ENCODE measurements at regions of chr6 and their contacts with region 1.

Region 1: DNA sequence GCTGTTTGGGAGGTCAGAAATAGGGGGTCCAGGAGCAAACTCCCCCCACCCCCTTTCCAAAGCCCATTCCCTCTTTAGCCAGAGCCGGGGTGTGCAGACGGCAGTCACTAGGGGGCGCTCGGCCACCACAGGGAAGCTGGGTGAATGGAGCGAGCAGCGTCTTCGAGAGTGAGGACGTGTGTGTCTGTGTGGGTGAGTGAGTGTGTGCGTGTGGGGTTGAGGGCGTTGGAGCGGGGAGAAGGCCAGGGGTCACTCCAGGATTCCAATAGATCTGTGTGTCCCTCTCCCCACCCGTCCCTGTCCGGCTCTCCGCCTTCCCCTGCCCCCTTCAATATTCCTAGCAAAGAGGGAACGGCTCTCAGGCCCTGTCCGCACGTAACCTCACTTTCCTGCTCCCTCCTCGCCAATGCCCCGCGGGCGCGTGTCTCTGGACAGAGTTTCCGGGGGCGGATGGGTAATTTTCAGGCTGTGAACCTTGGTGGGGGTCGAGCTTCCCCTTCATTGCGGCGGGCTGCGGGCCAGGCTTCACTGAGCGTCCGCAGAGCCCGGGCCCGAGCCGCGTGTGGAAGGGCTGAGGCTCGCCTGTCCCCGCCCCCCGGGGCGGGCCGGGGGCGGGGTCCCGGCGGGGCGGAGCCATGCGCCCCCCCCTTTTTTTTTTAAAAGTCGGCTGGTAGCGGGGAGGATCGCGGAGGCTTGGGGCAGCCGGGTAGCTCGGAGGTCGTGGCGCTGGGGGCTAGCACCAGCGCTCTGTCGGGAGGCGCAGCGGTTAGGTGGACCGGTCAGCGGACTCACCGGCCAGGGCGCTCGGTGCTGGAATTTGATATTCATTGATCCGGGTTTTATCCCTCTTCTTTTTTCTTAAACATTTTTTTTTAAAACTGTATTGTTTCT is at the start of gene VEGFA:
- DNase-seq: peak; percentile 98
- CTCF ChIP-seq: peak; percentile 99

Region 2: DNA sequence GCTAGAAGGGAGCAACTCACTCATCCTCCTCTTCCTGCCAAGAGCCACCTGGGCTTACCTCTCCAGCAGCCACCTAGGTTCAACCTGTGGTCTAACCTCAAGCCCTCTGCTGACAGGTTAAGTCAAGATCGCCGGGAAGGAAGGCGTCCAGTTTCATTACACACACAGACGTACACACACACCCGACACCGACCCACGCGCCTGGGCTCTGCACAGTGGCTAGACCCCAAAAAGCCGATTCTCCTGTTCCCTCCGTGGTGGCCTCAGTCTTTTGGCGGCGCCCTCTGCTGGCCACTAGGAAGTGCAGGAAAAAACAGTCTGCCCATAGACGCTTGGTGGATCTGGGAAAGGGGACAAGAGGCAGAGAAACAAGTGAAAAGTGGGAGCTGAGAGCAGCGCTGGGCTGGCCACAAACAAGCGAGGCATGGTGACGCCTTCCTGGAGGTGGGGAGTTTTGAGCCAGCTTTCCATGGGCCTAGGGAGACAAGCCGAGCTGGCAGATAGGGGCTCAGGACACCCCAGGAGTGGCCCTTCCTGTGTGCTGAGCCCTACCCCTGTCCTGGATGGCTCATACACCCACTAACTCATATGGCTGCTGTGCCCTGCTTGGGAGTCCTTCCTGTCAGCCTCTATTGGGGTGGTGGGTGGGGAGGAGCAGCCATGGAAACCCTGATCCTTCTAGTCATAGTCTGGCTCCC is 304.8 kb after region 1 on chr6:
- in situ Hi-C with region 1: loop called (anchors 10 kb)
- DNase-seq: peak; percentile 91
- CTCF ChIP-seq: peak; percentile 89